ENCODE measurements at regions of chr17 and their contacts with region 1.

Region 1: GRCh38 chr17:68291844-68292695 is 775 bp downstream of the ARSG start:
- DNase-seq: peak; percentile 92
- ATAC-seq: peak; percentile 71
- H3K4me3 Mint-ChIP-seq: peak overlapping the region; percentile 77
- H3K27ac Mint-ChIP-seq: peak overlapping the region; percentile 61
- H3K4me1 Mint-ChIP-seq: peaks cover 69% of the 10 kb centered on the region
- H3K27me3 Mint-ChIP-seq: no peaks in the 10 kb centered on the region

Region 2: DNA sequence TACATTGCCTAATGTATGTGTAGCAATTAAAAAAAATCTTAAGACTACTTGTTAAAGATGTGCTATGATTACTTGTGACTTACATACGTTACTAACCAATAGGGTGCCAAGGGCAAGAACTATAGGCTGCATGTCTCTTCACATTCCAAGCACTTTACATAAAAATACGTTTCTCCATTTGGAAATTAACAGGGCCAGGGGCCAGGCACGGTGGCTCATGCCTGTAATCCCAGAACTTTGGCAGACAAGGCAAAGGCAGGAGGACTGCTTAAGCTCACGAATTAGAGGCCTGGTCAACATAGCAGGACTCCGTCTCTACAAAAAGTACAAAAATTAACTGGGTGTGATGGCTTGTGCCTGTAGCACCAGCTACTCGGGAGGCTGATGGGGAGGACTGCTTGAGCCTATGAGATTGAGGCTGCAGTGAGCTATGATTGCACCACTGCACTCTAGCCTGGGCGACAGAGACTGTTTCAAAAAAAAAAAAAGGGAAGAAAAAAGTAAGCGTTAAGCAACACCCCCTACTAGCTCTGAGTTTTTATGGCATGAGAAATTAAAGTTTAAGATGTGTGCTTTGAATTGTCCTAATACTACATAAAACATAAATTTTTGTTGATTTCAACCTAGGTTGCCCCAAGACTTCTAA is 938.0 kb before region 1 on chr17:
- CTCF ChIA-PET with region 1: no interaction called
- POLR2A ChIA-PET with region 1: no interaction called
- intact Hi-C with region 1: no loop called
- DNase-seq: no peak
- ATAC-seq: no peak
- H3K4me3 Mint-ChIP-seq: no peak overlapping the region
- H3K27ac Mint-ChIP-seq: no peak overlapping the region
- H3K4me1 Mint-ChIP-seq: peaks cover 21% of the 10 kb centered on the region
- H3K27me3 Mint-ChIP-seq: no peaks in the 10 kb centered on the region

Region 3: DNA sequence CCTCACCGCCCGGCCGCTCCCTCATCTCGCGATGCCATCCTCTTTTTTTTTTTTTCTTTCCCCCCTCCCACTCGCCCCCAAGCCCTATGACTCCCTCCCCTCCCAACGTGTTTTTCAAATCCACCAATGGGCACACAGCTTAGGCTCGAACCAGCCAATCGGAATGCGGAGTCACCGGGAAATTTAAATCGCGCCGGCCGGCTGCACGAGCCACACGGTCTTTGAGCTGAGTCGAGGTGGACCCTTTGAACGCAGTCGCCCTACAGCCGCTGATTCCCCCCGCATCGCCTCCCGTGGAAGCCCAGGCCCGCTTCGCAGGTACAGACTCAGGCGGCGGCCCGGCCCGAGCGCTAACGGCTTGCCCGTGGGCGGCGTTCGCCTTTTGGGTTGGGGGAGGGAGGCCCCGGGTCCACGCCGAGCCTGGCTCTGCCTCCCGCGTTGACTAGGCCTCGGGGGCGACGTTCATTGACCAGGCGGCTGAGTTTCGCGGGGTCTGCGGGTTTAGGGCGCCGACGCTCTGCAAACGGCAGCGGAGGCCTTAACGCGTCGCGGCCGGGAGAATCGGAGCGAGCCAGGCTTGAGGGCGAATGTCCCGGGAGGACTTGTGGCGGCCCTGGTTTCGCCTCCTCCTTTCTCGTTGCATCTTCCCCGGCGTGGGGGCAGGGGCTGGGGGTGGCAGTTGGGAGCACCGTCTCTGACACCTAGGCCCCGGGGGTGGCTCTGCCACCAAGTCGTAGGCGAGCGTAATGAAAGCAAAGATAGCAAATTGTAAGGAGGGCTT is 256.4 kb before region 1 on chr17 and contains the start of gene KPNA2:
- CTCF ChIA-PET with region 1: no interaction called
- POLR2A ChIA-PET with region 1: interaction called, 4 read pairs
- intact Hi-C with region 1: loop called in 1 of 2 experiments (anchors 2 kb)
- DNase-seq: peak; percentile 93
- ATAC-seq: peak; percentile 91
- H3K4me3 Mint-ChIP-seq: peak within 1 kb of the TSS; percentile 96
- H3K27ac Mint-ChIP-seq: peak within 1 kb of the TSS; percentile 97
- H3K4me1 Mint-ChIP-seq: peaks cover 18% of the 10 kb centered on the region
- H3K27me3 Mint-ChIP-seq: no peaks in the 10 kb centered on the region
- total RNA-seq, gene KPNA2: 186 to 190 TPM

Region 4: GRCh38 chr17:68247445-68248198 is 44.4 kb before region 1 on chr17 and contains the start of gene AMZ2:
- CTCF ChIA-PET with region 1: no interaction called
- POLR2A ChIA-PET with region 1: interaction called, 9 read pairs
- intact Hi-C with region 1: loop called in 1 of 2 experiments (anchors 1 kb)
- DNase-seq: peak; percentile 98
- ATAC-seq: peak; percentile 84
- H3K4me3 Mint-ChIP-seq: peak within 1 kb of the TSS; percentile 88
- H3K27ac Mint-ChIP-seq: peak within 1 kb of the TSS; percentile 99
- H3K4me1 Mint-ChIP-seq: peaks cover 37% of the 10 kb centered on the region
- H3K27me3 Mint-ChIP-seq: no peaks in the 10 kb centered on the region
- total RNA-seq, gene AMZ2: 119 to 150 TPM

Region 5: GRCh38 chr17:68346448-68346847 is 54.4 kb after region 1 on chr17:
- CTCF ChIA-PET with region 1: interaction called, 5 read pairs
- POLR2A ChIA-PET with region 1: no interaction called
- intact Hi-C with region 1: loop called (anchors 1 to 2 kb)
- DNase-seq: peak; percentile 88
- ATAC-seq: peak; percentile 84
- H3K4me3 Mint-ChIP-seq: peak overlapping the region; percentile 79
- H3K27ac Mint-ChIP-seq: peak overlapping the region; percentile 100
- H3K4me1 Mint-ChIP-seq: peaks cover 67% of the 10 kb centered on the region
- H3K27me3 Mint-ChIP-seq: no peaks in the 10 kb centered on the region

Region 6: GRCh38 chr17:68435876-68436842 is 144.1 kb after region 1 on chr17:
- CTCF ChIA-PET with region 1: interaction called, 16 read pairs
- POLR2A ChIA-PET with region 1: interaction called, 4 read pairs
- intact Hi-C with region 1: loop called (anchors 1 kb)
- DNase-seq: peak; percentile 91
- ATAC-seq: peak; percentile 80
- H3K4me3 Mint-ChIP-seq: no peak overlapping the region
- H3K27ac Mint-ChIP-seq: peak overlapping the region; percentile 79
- H3K4me1 Mint-ChIP-seq: peaks cover 44% of the 10 kb centered on the region
- H3K27me3 Mint-ChIP-seq: no peaks in the 10 kb centered on the region